Right ventricle myocardium inferior (tissue), 1 donor: ENCODE measurements at regions of chr2 and their contacts with region 1.

Region 1: DNA sequence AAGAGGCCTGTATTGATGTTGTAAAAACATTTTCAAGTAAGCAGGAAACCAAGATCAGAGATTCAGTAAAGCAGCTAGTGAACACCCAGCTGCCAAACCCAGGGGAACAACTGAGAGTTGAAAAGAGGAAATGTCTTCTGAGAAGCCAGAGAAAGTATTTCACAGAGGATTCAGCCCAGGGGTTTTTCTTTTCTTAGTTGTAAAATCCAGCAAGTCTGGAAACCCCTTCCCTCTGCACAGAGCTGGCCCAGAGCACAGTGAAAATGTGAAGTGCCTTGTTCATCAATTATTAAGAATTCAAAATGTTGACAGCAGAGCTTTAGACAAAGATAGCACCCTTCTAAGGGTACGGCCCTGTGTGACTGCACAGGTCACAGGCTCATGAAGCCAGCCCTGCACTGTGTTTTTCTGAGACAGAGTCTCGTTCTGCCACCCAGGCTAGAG is 28.4 kb downstream of the AFF3 start:
- DNase-seq: no peak
- ATAC-seq: no peak

Region 2: DNA sequence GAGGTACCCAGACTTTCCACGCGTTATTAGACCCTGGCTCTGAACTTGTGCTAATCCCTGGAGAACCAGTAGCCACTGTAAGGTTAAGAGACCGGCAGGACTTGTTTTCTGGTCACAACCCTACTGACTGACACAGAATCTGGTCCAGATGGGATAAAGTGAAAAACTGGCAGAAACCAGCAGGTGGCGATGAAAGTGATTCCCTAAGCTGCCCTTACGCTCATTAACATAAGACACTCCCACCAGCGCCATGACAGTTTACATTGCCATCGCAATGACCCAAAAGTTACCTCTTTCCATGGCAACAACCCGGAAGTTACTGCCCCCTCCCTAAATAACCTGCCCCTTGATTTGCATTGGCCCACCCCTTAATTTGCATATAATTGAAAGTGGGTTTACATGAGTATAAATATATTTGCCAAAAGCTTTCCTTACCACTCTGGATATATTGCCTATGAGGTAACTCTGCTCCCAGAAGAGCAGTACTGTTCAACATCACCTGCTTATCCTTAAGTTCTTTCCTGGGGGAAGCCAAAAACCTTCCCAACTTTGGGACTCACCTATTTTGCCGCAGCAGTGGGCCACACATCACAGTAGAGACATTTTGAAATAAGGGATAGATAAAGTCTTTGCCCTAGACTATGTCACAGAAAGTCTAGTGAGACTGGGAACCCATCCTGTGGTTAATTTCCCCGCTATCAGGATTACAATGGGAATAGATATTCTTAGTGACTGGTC is 64.2 kb after region 1 on chr2:
- intact Hi-C with region 1: loop called (anchors 5 kb)
- DNase-seq: no peak
- ATAC-seq: no peak

Region 3: GRCh38 chr2:100235098-100235497 is 121.1 kb after region 1 on chr2:
- intact Hi-C with region 1: loop called (anchors 5 kb)
- DNase-seq: no peak
- ATAC-seq: no peak

Region 4: GRCh38 chr2:100670232-100670631 is 556.2 kb after region 1 on chr2:
- intact Hi-C with region 1: no loop called
- DNase-seq: no peak
- ATAC-seq: no peak